ENCODE measurements at regions of chrX and their contacts with region 1.

Region 1: DNA sequence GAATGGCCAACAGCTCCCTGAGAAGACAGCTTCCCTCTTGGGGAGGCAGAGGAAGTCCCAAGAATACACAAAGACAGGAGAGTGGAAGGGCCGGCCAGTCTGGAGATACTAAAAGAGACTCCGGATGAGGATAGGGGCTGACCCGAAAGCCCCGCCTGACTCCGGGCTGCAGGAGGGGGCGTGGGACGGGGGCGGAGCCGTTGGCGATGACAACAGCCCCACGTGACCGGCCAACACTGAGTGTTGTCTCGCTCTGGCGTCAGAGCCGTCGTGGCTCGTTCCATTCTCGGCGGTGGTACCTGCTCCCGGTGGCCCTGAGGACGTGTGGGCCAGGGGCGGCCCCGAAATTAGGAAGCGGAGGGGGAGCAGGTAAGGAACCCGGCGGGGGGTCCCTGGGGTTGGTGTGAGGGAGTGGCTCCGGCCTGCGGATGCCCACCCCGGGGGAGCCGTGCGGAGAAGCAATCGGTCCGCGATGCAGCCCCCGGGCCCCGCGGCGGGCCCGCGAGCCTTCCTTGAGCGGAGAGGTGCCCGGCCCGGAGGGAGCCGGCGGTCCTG is at the start of gene BEX4:
- DNase-seq: peak; percentile 83
- CTCF ChIP-seq: no peak

Region 2: GRCh38 chrX:103376118-103376978 is 161.4 kb after region 1 on chrX and contains the start of gene BEX3:
- in situ Hi-C with region 1: no loop called
- DNase-seq: peak; percentile 27
- CTCF ChIP-seq: no peak

Region 3: DNA sequence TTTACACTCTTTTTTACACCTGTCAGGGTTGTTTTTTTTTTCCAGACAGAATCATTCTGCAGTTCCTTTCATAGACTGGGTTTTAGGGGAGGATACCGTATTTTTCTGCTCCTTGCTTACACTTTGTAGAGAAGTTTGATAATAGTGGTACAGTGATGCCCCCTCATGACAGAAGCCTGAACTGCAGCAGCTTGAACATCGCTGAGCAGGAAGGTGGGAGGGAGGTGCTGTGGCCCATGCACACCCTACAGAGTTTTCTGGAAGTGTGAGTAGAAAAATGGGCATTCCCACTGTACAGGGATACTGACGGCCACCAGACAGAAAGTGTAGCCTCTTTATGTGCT is 249.8 kb after region 1 on chrX:
- in situ Hi-C with region 1: loop called (anchors 25 kb)
- DNase-seq: peak; percentile 32
- CTCF ChIP-seq: peak; percentile 74

Measured in GM13976 (cell line).